ENCODE measurements at regions of chr2 and their contacts with region 1.

Region 1: GRCh38 chr2:197477797-197478196 is 21.8 kb downstream of the HSPD1 start:
- DNase-seq: no peak
- ATAC-seq: no peak
- H3K4me3 ChIP-seq: no peak overlapping the region
- H3K27ac ChIP-seq: no peak overlapping the region
- H3K4me1 ChIP-seq: no peaks in the 10 kb centered on the region
- H3K27me3 ChIP-seq: no peaks in the 10 kb centered on the region
- CTCF ChIP-seq: no peak

Region 2: GRCh38 chr2:197416268-197416667 is 61.5 kb before region 1 on chr2:
- intact Hi-C with region 1: loop called (anchors 10 kb)
- DNase-seq: no peak
- ATAC-seq: no peak
- H3K4me3 ChIP-seq: no peak overlapping the region
- H3K27ac ChIP-seq: no peak overlapping the region
- H3K4me1 ChIP-seq: no peaks in the 10 kb centered on the region
- H3K27me3 ChIP-seq: no peaks in the 10 kb centered on the region
- CTCF ChIP-seq: no peak